Activated CD4-positive, alpha-beta memory T cell treated with anti-CD3 and anti-CD28 coated beads, Interleukin-2, amount 10 ng/mL, durations not matched to agents 7 days and 5 days (primary cell): ENCODE measurements at regions of chr5 and their contacts with region 1.

Region 1: GRCh38 chr5:96614110-96614691 is 48.0 kb upstream of the CAST start:
- DNase-seq: peak; percentile 44
- H3K4me3 Mint-ChIP-seq: no peak overlapping the region
- H3K27ac Mint-ChIP-seq: no peak overlapping the region
- H3K4me1 Mint-ChIP-seq: peaks cover 7% of the 10 kb centered on the region
- H3K27me3 Mint-ChIP-seq: peaks cover 38% of the 10 kb centered on the region

Region 2: GRCh38 chr5:94992098-94992724 is 1622.0 kb before region 1 on chr5:
- CTCF ChIA-PET with region 1: no interaction called
- POLR2A ChIA-PET with region 1: no interaction called
- DNase-seq: no peak
- H3K4me3 Mint-ChIP-seq: no peak overlapping the region
- H3K27ac Mint-ChIP-seq: no peak overlapping the region
- H3K4me1 Mint-ChIP-seq: no peaks in the 10 kb centered on the region
- H3K27me3 Mint-ChIP-seq: no peaks in the 10 kb centered on the region

Region 3: DNA sequence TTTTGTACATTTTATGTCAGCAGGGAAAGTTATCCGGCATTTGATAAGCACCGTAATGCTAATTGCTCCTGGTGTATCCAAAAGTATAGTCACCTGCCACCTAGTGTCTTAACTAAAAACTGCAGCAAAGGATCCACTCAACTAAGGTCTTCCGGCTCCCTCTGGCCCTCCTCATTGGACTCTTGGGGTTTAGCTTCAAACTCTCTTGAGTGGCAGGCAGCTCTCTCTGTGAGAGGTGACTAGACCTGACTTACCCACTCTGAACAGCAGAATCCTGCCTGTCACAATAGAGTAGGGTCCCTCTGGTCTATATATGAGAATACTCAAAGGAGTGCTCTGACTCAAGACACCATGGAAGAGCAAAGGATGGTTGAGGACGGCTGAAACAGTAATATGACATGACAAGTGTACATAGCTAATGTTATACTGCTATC is 12.4 kb before region 1 on chr5:
- CTCF ChIA-PET with region 1: interaction called, 35 read pairs
- POLR2A ChIA-PET with region 1: no interaction called
- DNase-seq: peak; percentile 45
- H3K4me3 Mint-ChIP-seq: no peak overlapping the region
- H3K27ac Mint-ChIP-seq: no peak overlapping the region
- H3K4me1 Mint-ChIP-seq: peaks cover 1% of the 10 kb centered on the region
- H3K27me3 Mint-ChIP-seq: peaks cover 18% of the 10 kb centered on the region

Region 4: DNA sequence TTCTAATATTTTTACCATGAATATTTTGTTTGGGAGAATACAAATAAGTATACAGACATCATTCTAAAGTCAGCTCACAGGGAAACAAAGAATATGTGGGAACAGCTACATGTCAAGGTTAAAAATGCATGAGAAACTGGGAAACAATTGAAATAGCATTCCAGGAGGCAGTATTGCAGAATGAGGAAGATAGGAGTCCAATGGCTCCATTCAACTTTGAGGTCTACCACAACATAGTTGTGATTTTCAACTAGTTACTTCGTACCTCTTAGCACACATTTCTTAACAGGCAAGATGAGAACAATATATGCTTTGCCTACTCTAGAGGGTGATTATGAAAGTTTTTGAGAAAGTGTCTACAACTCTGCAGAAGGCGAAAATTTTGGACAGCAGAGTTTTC is 12.8 kb after region 1 on chr5:
- CTCF ChIA-PET with region 1: interaction called, 10 read pairs
- POLR2A ChIA-PET with region 1: interaction called, 4 read pairs
- DNase-seq: no peak
- H3K4me3 Mint-ChIP-seq: no peak overlapping the region
- H3K27ac Mint-ChIP-seq: no peak overlapping the region
- H3K4me1 Mint-ChIP-seq: peaks cover 8% of the 10 kb centered on the region
- H3K27me3 Mint-ChIP-seq: peaks cover 14% of the 10 kb centered on the region

Region 5: DNA sequence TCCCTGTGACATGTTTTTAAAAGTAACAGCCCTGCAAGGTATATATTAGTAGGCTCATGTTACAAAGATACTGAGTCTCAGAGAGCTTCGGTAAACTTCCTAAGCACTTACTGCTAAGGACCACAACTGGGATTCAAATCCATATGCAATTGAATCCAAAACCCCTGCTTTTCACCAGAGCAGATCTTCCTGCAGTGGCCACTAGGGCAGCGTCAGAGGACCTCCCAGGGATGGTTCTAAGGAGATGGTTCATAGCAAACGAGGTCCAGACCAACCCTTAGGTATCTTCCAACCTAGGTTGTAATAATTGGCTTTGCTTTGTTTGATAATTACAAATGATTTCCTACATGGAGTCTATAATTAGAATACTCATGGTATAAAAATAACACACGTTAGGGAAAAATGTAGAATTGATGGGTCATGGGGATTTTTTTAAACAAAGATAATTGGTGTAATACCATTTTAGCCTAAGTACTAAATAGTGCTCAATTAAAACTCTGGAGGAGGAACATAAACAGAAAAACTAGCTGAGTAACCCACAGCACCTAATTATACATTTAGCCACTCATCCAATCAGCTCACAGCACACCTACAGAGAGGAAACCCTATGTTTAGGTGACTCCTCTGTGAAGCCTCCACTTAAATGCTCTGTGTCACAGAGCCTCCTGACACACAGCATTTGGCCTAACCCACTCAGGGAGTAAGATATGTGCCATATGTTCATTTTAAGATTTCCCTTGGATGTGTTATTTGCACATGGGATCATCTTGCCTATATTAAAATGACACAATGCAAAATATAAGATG is 38.0 kb after region 1 on chr5:
- CTCF ChIA-PET with region 1: interaction called, 10 read pairs
- POLR2A ChIA-PET with region 1: interaction called, 3 read pairs
- DNase-seq: no peak
- H3K4me3 Mint-ChIP-seq: no peak overlapping the region
- H3K27ac Mint-ChIP-seq: no peak overlapping the region
- H3K4me1 Mint-ChIP-seq: peaks cover 35% of the 10 kb centered on the region
- H3K27me3 Mint-ChIP-seq: peaks cover 68% of the 10 kb centered on the region

Region 6: DNA sequence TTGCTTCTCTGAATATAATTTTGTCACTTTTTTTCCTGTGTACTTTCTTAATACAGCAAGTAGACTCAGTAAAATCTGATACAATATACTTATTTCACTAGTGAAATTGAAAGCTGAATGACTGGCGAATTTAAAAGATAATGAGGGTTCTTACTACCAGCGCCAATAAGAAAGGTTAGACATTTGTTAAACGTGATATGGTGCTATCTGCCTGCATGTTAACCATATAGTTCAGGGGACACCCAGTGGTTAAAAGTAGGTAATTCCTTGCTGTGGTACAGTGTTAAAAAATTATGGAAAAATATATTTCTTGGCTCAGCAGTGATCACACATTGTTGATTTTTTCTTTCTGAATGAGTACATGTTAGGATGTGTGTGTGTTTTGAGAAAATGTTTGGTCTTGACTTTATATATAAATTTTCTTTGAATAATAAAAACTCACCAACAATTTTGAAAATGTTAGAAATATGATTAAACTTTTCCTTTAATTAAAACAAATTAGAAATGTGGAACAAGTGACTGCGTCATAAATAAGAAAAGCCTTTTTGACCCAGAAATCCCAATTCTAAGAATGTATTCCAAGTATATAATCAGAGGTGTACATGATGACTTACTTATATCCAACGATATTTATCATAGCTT is 73.7 kb after region 1 on chr5:
- CTCF ChIA-PET with region 1: interaction called, 24 read pairs
- POLR2A ChIA-PET with region 1: no interaction called
- DNase-seq: no peak
- H3K4me3 Mint-ChIP-seq: no peak overlapping the region
- H3K27ac Mint-ChIP-seq: no peak overlapping the region
- H3K4me1 Mint-ChIP-seq: peaks cover 14% of the 10 kb centered on the region
- H3K27me3 Mint-ChIP-seq: no peaks in the 10 kb centered on the region

Region 7: GRCh38 chr5:96729156-96729555 is 115.0 kb after region 1 on chr5:
- CTCF ChIA-PET with region 1: interaction called, 11 read pairs
- POLR2A ChIA-PET with region 1: no interaction called
- DNase-seq: no peak
- H3K4me3 Mint-ChIP-seq: no peak overlapping the region
- H3K27ac Mint-ChIP-seq: no peak overlapping the region
- H3K4me1 Mint-ChIP-seq: peaks cover 3% of the 10 kb centered on the region
- H3K27me3 Mint-ChIP-seq: no peaks in the 10 kb centered on the region

Region 8: DNA sequence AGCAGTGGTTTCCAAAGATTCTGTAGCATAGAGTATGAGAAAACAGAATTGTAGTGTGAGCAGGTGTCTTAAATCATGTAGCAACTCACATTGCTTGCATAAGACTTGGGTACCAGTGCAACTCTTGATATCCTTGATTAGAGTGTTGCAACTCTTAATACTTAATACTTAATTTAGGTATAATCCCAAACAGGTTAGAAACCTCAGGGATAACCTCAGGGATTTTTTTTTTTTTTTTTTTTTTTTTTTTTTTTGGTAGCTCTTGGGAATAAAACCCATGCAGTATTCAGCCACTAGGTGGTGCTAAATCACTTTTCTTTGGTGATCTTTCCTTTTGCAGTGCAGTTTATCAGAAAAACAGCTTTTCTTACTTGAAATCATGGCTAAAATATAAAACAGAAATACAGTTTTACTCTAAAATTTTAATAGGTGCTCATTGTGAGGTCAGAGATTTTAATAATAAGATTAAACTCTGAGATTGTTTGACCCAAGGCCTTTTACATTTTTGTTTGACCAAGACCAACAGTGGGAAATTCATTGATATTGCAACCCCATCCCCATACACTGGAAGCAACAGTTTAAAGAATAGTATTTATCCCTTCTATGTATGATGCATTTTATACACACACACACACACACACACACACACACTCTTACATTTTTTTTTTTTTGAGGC is 138.3 kb after region 1 on chr5:
- CTCF ChIA-PET with region 1: interaction called, 31 read pairs
- POLR2A ChIA-PET with region 1: no interaction called
- DNase-seq: no peak
- H3K4me3 Mint-ChIP-seq: no peak overlapping the region
- H3K27ac Mint-ChIP-seq: no peak overlapping the region
- H3K4me1 Mint-ChIP-seq: no peaks in the 10 kb centered on the region
- H3K27me3 Mint-ChIP-seq: no peaks in the 10 kb centered on the region